ENCODE measurements at regions of chr18 and their contacts with region 1.

Region 1: GRCh38 chr18:77207540-77207939 is 42.1 kb upstream of the GALR1 start:
- DNase-seq: peak; percentile 51
- H3K4me3 ChIP-seq: no peak overlapping the region
- H3K27ac ChIP-seq: peak overlapping the region; percentile 64
- H3K4me1 ChIP-seq: peaks cover 25% of the 10 kb centered on the region
- H3K27me3 ChIP-seq: peaks cover 2% of the 10 kb centered on the region
- CTCF ChIP-seq: peak; percentile 61

Region 2: GRCh38 chr18:77000527-77000926 is 207.0 kb before region 1 on chr18:
- intact Hi-C with region 1: loop called (anchors 5 kb)
- DNase-seq: peak; percentile 56
- H3K4me3 ChIP-seq: peak overlapping the region; percentile 20
- H3K27ac ChIP-seq: no peak overlapping the region
- H3K4me1 ChIP-seq: no peaks in the 10 kb centered on the region
- H3K27me3 ChIP-seq: no peaks in the 10 kb centered on the region
- CTCF ChIP-seq: peak; percentile 99

Region 3: DNA sequence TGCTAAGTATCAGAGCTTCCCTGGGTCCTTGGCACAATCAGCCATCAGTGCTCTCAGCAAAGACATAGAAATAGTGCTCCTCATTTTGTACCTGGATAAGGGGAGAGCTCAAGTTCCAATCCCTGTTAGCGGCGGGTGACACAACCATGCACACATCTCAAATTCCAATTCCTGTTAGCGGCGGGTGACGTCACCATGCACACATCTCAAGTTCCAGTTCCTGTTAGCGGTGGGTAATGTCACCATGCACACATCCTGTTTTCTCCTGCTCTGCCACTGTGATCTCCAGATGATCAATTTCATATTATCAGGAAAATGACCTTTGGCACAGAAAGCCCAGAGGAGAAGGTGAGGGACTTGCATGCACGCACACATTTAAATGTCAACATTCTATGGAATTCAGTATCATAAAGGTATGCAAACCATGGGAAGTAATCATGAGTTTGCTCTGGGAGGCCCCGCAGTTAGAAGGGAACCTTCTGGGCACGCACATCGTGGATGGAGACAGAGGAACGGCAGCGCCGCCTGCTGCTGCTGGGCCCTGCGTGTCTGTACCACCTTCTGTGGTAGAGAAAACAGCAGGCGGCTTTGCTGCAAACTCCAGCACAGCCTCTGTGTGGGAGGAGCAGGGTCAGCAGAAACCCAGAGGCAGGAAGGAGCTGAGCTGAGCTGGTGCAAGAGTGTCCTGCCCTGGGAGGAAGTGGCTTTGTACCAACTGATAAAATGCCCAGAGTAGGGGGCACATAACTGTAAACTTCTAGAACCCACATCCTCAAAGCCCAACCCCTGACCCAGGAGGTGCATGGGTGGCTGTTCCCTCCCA is 152.7 kb before region 1 on chr18:
- intact Hi-C with region 1: loop called (anchors 5 kb)
- DNase-seq: peak; percentile 84
- H3K4me3 ChIP-seq: no peak overlapping the region
- H3K27ac ChIP-seq: peak overlapping the region; percentile 80
- H3K4me1 ChIP-seq: peaks cover 72% of the 10 kb centered on the region
- H3K27me3 ChIP-seq: no peaks in the 10 kb centered on the region
- CTCF ChIP-seq: peak; percentile 75